ENCODE measurements at regions of chr3 and their contacts with region 1.

Region 1: DNA sequence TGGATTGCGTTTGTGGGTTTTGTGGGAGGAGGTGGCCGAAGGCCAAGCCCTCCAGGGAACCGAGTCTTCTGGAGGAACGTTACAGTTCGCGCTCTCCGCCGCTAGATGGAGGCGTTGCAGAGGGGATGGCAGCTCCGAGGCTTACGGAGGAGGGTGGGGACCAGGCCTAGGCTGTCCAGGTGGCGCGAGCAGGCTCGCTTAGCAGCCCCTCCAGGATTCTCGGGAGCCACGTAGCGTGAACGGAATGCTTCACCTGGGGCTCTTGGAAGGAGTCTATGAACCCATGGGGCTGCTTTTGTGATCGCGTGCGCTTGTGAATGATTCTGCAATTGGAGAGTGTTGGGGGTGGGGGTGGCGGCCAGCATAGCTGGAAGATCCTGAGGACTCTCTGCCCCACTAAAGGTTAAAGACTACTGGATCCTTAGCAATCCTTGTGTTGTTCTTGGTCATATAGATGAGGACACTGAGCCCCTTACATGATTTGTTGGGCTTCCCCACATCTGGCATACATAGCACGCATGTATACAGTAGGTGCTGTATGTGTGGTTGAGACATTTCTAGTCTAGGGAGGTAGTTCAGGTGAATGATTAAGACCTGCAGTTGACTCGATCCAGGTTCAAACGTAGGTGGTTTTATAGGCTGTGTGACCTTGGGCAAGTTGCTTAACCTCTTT is 25.7 kb downstream of the FAM3D start:
- DNase-seq: peak; percentile 82
- CTCF ChIP-seq: peak; percentile 87

Region 2: GRCh38 chr3:58654266-58654880 is 13.5 kb after region 1 on chr3:
- CTCF ChIA-PET with region 1: interaction called, 10 read pairs
- POLR2A ChIA-PET with region 1: no interaction called
- DNase-seq: no peak
- CTCF ChIP-seq: no peak

Measured in GM10248 (cell line).